PC-9 (cell line): ENCODE measurements at regions of chr9 and their contacts with region 1.

Region 1: DNA sequence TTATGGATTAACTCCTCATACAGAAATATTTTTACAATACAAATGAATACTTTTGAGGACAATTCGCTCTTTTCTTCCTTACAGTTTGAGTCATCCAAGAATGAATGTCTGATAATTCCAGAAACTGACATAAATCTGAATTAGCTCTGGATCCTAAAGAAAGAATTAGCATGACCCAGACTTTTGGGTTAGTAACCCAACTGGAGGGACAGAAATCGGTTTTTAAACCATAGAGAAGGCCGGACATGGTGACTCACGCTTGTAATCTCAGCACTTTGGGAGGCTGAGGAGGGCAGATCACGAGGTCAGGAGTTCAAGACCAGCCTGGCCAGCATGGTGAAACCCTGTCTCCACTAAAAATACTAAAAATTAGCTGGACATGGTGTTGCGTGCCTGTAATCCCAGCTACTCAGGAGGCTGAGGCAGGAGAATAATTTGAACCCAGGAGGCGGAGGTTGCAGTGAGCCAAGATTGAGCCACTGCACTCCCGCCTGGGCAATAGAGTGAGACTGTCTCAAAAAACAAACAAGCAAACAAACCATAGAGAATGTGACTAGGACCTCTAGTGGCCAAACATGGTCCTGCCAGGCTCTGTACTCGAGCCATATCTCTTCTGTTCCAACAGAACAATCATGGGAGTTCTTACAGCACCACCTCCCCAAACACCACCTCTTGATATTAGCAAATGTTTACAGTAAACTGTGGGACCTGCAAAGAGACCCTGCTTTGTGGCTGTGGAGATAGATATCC is 44.8 kb downstream of the LURAP1L start:
- DNase-seq: no peak
- H3K4me3 ChIP-seq: no peak overlapping the region
- H3K27ac ChIP-seq: no peak overlapping the region
- H3K4me1 ChIP-seq: peaks cover 22% of the 10 kb centered on the region
- H3K27me3 ChIP-seq: no peaks in the 10 kb centered on the region
- CTCF ChIP-seq: peak; percentile 49

Region 2: GRCh38 chr9:12784461-12785259 is 35.0 kb before region 1 on chr9:
- CTCF ChIA-PET with region 1: interaction called, 10 read pairs
- POLR2A ChIA-PET with region 1: interaction called, 5 read pairs
- intact Hi-C with region 1: loop called (anchors 1 kb)
- DNase-seq: peak; percentile 76 to 96
- H3K4me3 ChIP-seq: peak overlapping the region; percentile 29; the same call in 1 of the 2 replicates
- H3K27ac ChIP-seq: peak overlapping the region; percentile 100
- H3K4me1 ChIP-seq: peaks cover 35% of the 10 kb centered on the region
- H3K27me3 ChIP-seq: no peaks in the 10 kb centered on the region
- CTCF ChIP-seq: no peak

Region 3: DNA sequence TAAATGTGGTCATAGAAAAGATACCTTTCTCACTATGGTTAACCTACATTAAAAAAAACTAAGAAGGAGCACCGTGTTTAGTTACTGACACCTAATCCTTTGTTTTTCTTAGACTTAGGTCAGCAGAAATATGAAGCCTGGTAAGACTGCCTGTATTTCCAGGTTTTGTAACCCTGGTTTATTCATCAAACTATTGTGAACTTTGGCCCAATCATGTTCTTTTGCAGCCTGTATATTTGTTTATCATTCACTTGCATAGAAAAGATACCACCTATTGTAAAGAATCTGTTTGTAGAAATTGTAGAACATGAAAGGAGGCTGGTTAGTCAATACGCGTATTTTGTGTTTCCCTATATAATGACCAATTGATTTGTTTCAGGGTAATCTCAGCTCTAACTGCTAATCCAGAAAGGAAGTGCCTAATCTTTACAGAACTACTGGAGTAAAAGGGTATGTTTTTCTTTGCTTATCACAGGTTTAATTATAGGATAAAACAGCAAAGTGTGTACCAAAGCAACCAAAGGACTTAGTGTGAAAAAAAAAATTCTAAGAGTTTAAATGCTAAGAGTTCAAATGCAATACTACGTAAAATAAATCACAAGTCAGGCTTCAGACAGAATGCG is 58.9 kb after region 1 on chr9:
- CTCF ChIA-PET with region 1: no interaction called
- POLR2A ChIA-PET with region 1: no interaction called
- intact Hi-C with region 1: loop called (anchors 5 kb)
- DNase-seq: peak in 1 of 2 experiments; percentile 52
- H3K4me3 ChIP-seq: no peak overlapping the region
- H3K27ac ChIP-seq: peak overlapping the region; percentile 52
- H3K4me1 ChIP-seq: peaks cover 21% of the 10 kb centered on the region
- H3K27me3 ChIP-seq: no peaks in the 10 kb centered on the region
- CTCF ChIP-seq: no peak